CD4-positive, alpha-beta memory T cell (primary cell): ENCODE measurements at regions of chr20 and their contacts with region 1.

Region 1: DNA sequence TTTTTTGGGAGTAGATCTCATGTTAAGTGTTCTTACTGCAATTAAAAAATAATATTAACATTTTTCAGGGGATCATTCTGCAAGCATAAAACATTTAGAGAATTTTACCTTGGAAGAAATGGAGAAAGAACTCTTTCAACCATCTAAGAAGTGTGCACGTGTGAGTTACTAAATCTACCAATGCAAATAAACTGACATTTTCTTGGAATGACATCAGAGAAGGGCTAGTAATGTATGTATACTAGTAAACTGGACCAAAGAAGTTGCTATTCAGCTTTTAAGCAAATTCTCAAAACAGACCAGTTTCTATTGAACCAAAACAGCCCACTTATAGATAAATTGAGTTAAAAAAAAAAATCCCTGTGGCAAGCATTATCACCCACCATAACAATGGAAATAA is 191.2 kb downstream of the BTBD3 start:
- DNase-seq: no peak
- H3K4me3 ChIP-seq: no peak overlapping the region
- H3K4me3 Mint-ChIP-seq: no peak overlapping the region
- H3K27ac ChIP-seq: no peak overlapping the region
- H3K27ac Mint-ChIP-seq: no peak overlapping the region
- H3K4me1 ChIP-seq: no peaks in the 10 kb centered on the region
- H3K4me1 Mint-ChIP-seq: no peaks in the 10 kb centered on the region
- H3K27me3 ChIP-seq: no peaks in the 10 kb centered on the region
- H3K27me3 Mint-ChIP-seq: no peaks in the 10 kb centered on the region

Region 2: DNA sequence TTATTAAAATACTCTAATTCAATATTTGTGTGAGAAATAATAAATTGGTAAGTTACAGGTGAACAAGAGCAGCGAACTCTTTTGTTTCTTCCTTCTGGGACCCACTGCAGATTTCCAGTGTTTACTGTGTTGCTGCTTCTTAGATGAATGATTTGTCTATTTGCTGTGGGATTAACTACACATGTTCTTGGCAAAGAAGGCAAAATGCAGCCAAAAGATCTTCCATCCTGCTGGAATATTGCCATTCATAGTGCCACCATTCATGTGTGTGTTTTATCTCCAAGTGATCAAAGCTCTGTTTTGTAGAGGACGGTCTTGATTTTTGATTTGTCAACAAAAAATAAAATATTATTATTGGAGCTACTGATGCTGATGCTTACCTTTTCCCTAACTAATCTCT is 68.1 kb before region 1 on chr20:
- CTCF ChIA-PET with region 1: no interaction called
- POLR2A ChIA-PET with region 1: no interaction called
- intact Hi-C with region 1: no loop called
- DNase-seq: no peak
- H3K4me3 ChIP-seq: no peak overlapping the region
- H3K4me3 Mint-ChIP-seq: no peak overlapping the region
- H3K27ac ChIP-seq: no peak overlapping the region
- H3K27ac Mint-ChIP-seq: no peak overlapping the region
- H3K4me1 ChIP-seq: no peaks in the 10 kb centered on the region
- H3K4me1 Mint-ChIP-seq: no peaks in the 10 kb centered on the region
- H3K27me3 ChIP-seq: no peaks in the 10 kb centered on the region
- H3K27me3 Mint-ChIP-seq: no peaks in the 10 kb centered on the region

Region 3: DNA sequence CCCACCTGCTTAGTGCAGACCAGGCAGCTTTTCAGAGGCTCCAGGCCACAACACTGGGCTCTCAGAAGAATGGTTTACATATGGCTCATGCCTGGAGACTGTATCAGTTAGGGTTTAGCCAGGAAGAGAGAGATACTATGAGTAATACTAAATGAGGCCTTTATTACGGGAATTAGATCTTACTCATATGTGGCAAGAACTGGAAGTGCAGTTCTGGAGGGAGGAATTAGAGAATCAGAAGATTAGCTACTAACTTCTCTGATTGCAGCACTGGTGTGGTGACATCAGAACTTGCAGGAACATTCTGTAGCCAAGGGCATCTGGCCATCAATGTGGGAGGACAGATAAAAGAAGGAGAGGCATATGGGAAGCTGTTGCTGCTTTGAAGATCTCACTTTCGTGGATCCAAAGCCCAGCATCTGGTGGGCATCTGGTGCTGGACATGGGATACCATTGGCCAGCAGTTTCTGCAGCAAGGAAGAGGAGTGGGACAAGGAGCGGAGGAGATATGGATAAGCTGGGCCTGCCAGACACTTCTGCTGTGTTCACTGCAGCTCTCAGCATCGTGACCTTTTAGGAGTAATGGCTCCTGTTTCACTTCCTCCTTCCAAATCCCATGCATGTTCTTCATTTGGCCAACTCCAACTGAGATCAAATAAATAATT is 57.3 kb after region 1 on chr20:
- CTCF ChIA-PET with region 1: no interaction called
- POLR2A ChIA-PET with region 1: no interaction called
- intact Hi-C with region 1: loop called (anchors 10 kb)
- DNase-seq: peak in 1 of 5 donors; percentile 4
- H3K4me3 ChIP-seq: no peak overlapping the region
- H3K4me3 Mint-ChIP-seq: no peak overlapping the region
- H3K27ac ChIP-seq: no peak overlapping the region
- H3K27ac Mint-ChIP-seq: no peak overlapping the region
- H3K4me1 ChIP-seq: no peaks in the 10 kb centered on the region
- H3K4me1 Mint-ChIP-seq: no peaks in the 10 kb centered on the region
- H3K27me3 ChIP-seq: no peaks in the 10 kb centered on the region
- H3K27me3 Mint-ChIP-seq: no peaks in the 10 kb centered on the region